ENCODE measurements at regions of chr7 and their contacts with region 1.

Region 1: DNA sequence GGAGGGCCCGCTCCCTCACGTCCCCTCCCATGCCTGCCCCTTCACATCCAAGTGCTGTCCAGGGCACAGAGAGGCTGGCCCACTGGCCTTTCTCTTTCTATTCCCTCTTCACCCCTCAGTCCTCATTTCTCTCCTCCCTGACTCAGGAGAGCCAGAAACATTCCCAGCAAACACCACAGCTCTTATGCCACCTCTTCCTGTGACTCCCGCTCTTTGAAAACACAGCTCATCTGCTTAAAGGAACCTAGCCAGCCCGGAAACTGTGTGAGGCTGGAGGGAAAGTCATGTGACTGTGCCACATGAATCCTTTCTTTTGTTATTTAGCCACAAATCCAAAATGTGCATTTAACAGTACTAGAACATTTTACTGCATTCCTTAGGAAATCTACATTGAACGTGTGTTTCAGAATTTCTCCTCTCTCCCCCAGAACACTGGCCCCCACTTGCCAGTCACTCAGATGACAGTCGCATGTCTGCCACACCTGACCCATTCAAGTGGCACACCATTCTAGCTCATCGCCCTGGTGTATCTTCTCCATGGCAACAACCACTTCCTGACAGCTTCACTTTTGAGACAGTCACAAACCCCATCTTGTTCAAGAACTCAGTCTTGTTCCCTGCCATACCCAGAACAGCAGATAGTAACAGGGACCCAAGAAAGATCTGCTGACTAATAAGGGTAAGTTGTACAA is 42.8 kb downstream of the GRB10 start:
- DNase-seq: peak; percentile 29 to 91 (median 69)
- ATAC-seq: peak; percentile 98
- H3K4me3 ChIP-seq: peak overlapping the region; percentile 2 to 24
- H3K4me3 Mint-ChIP-seq: peak overlapping the region; percentile 75
- H3K27ac ChIP-seq: peak overlapping the region; percentile 64 to 72
- H3K27ac Mint-ChIP-seq: peak overlapping the region; percentile 93
- H3K4me1 ChIP-seq: peaks cover 19% of the 10 kb centered on the region
- H3K4me1 Mint-ChIP-seq: peaks cover 28% of the 10 kb centered on the region
- H3K27me3 ChIP-seq: no peaks in the 10 kb centered on the region
- H3K27me3 Mint-ChIP-seq: no peaks in the 10 kb centered on the region
- CTCF ChIP-seq: no peak

Region 2: GRCh38 chr7:49866910-49867309 is 873.0 kb before region 1 on chr7:
- CTCF ChIA-PET with region 1: no interaction called
- POLR2A ChIA-PET with region 1: no interaction called
- intact Hi-C with region 1: no loop called
- DNase-seq: no peak
- ATAC-seq: no peak
- H3K4me3 ChIP-seq: no peak overlapping the region
- H3K4me3 Mint-ChIP-seq: no peak overlapping the region
- H3K27ac ChIP-seq: no peak overlapping the region
- H3K27ac Mint-ChIP-seq: no peak overlapping the region
- H3K4me1 ChIP-seq: no peaks in the 10 kb centered on the region
- H3K4me1 Mint-ChIP-seq: no peaks in the 10 kb centered on the region
- H3K27me3 ChIP-seq: no peaks in the 10 kb centered on the region
- H3K27me3 Mint-ChIP-seq: peaks cover 22% of the 10 kb centered on the region
- CTCF ChIP-seq: no peak

Region 3: DNA sequence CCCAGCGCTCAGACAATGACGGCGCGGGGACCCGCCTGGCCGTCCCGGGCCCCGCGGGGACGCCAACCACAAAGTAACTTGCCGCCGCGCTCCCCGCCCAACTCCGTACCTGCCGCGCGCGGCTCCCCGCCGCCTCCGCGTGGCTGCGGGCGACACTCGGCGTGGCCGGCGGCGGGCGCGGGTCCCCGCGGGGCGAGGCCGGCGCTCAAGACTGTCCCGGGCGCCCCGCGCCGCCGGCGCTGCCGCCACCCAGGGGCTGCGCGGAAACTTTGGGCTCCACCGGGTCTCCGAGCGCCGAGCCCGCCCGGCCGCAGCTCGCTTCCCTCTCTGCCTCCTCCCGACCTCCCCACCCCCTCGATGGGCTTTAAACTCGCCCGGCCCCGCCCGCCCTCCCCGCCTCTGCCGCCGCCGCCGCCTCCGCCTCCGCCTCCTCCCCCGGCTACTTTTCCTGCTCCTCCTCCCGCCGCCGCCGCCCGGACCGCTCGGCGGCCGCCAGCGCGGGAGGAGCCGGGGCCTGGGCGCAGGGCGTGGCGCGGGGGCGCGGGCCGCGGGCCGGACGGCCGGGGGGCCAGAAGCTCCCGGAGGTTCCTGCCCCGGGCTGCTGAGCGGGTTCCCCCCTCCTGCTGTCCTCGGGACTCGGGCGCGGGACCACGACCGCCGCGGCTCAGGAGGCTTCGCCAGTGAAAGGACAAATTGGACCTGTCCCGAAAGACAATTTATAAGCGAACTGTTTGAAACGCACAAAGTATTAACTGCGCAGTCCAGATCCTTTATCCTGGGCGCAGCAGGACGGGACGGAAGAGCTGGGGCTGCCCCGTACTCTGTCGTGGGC is 53.4 kb after region 1 on chr7:
- CTCF ChIA-PET with region 1: interaction called, 3 read pairs
- POLR2A ChIA-PET with region 1: no interaction called
- intact Hi-C with region 1: loop called in 1 of 2 experiments (anchors 5 kb)
- DNase-seq: peak in 3 of 9 experiments; percentile 32 to 35 (median 35)
- ATAC-seq: peak; percentile 49
- H3K4me3 ChIP-seq: peak overlapping the region in 1 of 2 experiments; percentile 28
- H3K4me3 Mint-ChIP-seq: peak overlapping the region; percentile 76
- H3K27ac ChIP-seq: no peak overlapping the region
- H3K27ac Mint-ChIP-seq: no peak overlapping the region
- H3K4me1 ChIP-seq: peaks cover 8% of the 10 kb centered on the region
- H3K4me1 Mint-ChIP-seq: peaks cover 11% of the 10 kb centered on the region
- H3K27me3 ChIP-seq: peaks cover 2 to 4% of the 10 kb centered on the region in 2 experiments
- H3K27me3 Mint-ChIP-seq: peaks cover 44% of the 10 kb centered on the region
- CTCF ChIP-seq: no peak